CD8-positive, alpha-beta memory T cell (primary cell): ENCODE measurements at regions of chr11 and their contacts with region 1.

Region 1: DNA sequence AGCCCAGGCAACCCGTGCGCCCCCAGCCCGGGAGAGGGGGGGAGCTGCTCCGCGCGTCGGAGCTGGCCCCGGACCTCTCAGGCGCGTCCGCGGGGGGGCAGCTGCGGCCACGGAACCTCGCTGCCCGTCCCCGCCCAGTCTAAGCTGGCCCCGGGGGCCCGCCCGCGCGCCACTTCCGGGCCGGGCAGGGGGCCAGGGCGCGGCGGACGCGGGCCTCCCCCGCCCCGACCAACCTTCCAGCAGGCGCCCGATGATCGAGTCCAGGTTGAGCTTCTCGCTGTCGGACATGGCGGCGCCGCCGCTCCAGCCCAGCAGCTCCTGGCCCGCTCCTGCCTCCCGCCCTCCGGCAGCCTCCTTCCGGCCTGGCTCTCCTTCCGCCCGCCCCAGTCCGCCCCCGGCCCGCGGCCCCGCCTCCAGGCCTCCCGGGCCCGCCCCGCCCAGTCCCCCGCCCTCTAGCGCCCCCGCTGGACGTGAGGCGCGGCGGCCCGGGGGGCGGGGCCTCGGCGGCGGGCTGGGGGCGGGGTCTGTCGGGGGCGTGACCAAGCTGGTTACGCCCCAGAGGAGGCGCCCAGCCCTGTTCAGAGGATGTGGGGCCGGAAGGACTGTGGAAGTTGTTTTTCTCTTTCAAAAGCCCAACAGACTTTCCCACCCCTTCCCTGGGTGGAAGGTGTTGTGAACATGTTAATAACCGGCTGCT is at the start of gene PPP1CA:
- DNase-seq: peak; percentile 87 to 93 (median 92)
- H3K4me3 ChIP-seq: peak within 1 kb of the TSS; percentile 88
- H3K4me3 Mint-ChIP-seq: peak within 1 kb of the TSS; percentile 89 to 99 (median 95)
- H3K27ac ChIP-seq: peak within 1 kb of the TSS; percentile 87
- H3K27ac Mint-ChIP-seq: peak within 1 kb of the TSS; percentile 78 to 98 (median 93)
- H3K4me1 ChIP-seq: peaks cover 74% of the 10 kb centered on the region
- H3K4me1 Mint-ChIP-seq: peaks cover 40 to 82% (median 53%) of the 10 kb centered on the region in 3 donors
- H3K27me3 ChIP-seq: no peaks in the 10 kb centered on the region
- H3K27me3 Mint-ChIP-seq: no peaks in the 10 kb centered on the region
- total RNA-seq, gene PPP1CA: 338 to 357 TPM

Region 2: DNA sequence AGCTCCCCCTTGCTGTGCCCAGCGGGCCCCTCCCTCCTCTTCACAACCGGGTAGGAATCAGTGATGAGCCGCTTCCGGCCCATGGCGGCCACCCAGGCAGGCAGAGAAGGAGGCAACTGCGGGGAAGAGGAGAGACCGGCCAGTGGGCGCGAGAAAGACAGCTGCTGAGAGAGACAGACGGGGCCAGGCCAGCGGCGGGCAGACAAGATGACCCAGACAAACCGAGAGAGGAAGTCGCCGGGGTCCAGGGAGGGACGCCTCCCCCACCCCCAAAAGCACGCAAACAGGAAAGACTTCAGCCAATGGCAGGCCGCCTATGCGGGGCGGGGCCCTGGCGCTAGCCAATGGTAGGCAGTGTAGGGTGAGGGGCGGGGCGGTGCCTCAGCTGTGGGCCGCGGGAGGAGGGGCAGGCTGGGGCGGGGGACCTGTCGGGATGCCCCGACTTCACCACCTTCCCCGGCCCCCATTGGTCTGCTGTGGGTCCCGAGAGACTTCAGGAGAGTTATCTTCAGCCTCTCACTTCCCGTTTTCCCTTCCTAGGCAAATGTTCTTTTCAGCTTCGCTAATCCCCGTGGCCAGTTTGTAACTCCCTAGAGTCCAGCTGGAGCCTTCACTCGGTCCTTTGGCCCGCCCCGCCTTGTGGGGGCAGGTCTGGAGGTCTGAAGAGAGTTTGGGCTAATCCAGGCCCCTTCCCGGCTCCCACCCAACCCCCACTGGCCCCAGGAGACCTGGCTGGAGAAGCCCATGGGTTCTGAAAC is 48.1 kb before region 1 on chr11 and contains the start of gene POLD4:
- CTCF ChIA-PET with region 1: interaction called, 23 read pairs
- POLR2A ChIA-PET with region 1: interaction called, 18 read pairs
- DNase-seq: peak; percentile 92 to 97 (median 96)
- H3K4me3 ChIP-seq: peak within 1 kb of the TSS; percentile 96
- H3K4me3 Mint-ChIP-seq: peak within 1 kb of the TSS; percentile 92 to 98 (median 95)
- H3K27ac ChIP-seq: peak within 1 kb of the TSS; percentile 96
- H3K27ac Mint-ChIP-seq: peak within 1 kb of the TSS; percentile 97 to 99 (median 98)
- H3K4me1 ChIP-seq: peaks cover 50% of the 10 kb centered on the region
- H3K4me1 Mint-ChIP-seq: peaks cover 35 to 69% (median 55%) of the 10 kb centered on the region in 3 donors
- H3K27me3 ChIP-seq: no peaks in the 10 kb centered on the region
- H3K27me3 Mint-ChIP-seq: no peaks in the 10 kb centered on the region
- total RNA-seq, gene POLD4: 32.3 to 37.8 TPM

Region 3: GRCh38 chr11:67391304-67392132 is 10.1 kb before region 1 on chr11 and contains the start of gene RAD9A:
- CTCF ChIA-PET with region 1: interaction called, 53 read pairs
- POLR2A ChIA-PET with region 1: interaction called, 38 read pairs
- DNase-seq: peak; percentile 88 to 96 (median 94)
- H3K4me3 ChIP-seq: peak within 1 kb of the TSS; percentile 96
- H3K4me3 Mint-ChIP-seq: peak within 1 kb of the TSS; percentile 86 to 94 (median 87)
- H3K27ac ChIP-seq: peak within 1 kb of the TSS; percentile 83
- H3K27ac Mint-ChIP-seq: peak within 1 kb of the TSS; percentile 80 to 96 (median 88)
- H3K4me1 ChIP-seq: peaks cover 25% of the 10 kb centered on the region
- H3K4me1 Mint-ChIP-seq: peaks cover 30 to 48% (median 36%) of the 10 kb centered on the region in 3 donors
- H3K27me3 ChIP-seq: no peaks in the 10 kb centered on the region
- H3K27me3 Mint-ChIP-seq: no peaks in the 10 kb centered on the region
- total RNA-seq, gene RAD9A: 36.8 to 38.8 TPM

Region 4: DNA sequence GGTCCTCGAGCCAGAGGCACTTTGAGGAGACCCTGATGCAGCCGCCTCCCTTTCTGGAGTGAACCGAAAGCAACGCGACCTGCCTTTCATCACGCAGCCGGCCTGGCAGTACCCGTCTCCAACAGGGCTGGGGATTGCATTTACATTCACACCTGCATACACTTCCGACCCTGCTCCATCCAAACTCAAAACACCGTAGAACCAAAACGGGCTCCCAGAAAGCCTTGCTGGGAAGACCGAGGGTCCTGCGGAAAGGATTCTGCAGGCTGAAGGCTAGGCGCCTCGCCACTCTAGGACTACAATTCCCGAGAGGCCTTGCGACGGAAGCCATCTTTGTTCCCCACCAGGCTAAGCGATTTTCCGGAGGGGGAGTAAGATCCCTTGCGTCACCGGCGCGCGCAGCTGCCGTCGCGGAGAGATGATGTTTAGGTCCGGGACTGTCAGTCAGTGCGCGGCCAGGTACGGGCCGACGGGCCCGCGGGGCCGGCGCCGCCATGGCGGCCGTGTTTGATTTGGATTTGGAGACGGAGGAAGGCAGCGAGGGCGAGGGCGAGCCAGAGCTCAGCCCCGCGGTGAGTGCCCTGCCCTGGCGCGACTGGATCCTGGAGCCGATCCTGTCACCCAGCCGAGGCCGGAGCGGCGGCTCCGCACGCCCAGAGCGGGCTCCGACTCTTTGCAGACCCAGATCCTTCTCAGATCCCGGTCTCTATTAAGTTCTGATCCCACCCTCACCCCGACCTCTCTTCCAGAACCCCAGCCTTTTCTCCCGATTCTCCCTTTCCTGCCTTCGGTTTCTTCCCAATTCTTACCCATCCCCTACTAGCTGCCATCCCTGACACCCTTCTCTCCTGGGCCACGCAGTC is 26.6 kb after region 1 on chr11 and contains the start of gene RPS6KB2:
- CTCF ChIA-PET with region 1: interaction called, 23 read pairs
- POLR2A ChIA-PET with region 1: interaction called, 203 read pairs
- DNase-seq: peak; percentile 96 to 99 (median 99)
- H3K4me3 ChIP-seq: peak within 1 kb of the TSS; percentile 76
- H3K4me3 Mint-ChIP-seq: peak within 1 kb of the TSS; percentile 94 to 100 (median 99)
- H3K27ac ChIP-seq: peak within 1 kb of the TSS; percentile 91
- H3K27ac Mint-ChIP-seq: peak within 1 kb of the TSS; percentile 93 to 99 (median 98)
- H3K4me1 ChIP-seq: peaks cover 39% of the 10 kb centered on the region
- H3K4me1 Mint-ChIP-seq: peaks cover 24 to 60% (median 31%) of the 10 kb centered on the region in 3 donors
- H3K27me3 ChIP-seq: no peaks in the 10 kb centered on the region
- H3K27me3 Mint-ChIP-seq: peaks cover 0 to 6% of the 10 kb centered on the region in 2 donors
- total RNA-seq, gene RPS6KB2: 86.0 to 88.4 TPM

Region 5: GRCh38 chr11:67482825-67483798 is 81.5 kb after region 1 on chr11 and contains the start of gene AIP:
- CTCF ChIA-PET with region 1: interaction called, 13 read pairs
- POLR2A ChIA-PET with region 1: interaction called, 18 read pairs
- DNase-seq: peak; percentile 96 to 98 (median 96)
- H3K4me3 ChIP-seq: peak within 1 kb of the TSS; percentile 96
- H3K4me3 Mint-ChIP-seq: peak within 1 kb of the TSS; percentile 87 to 99 (median 95)
- H3K27ac ChIP-seq: peak within 1 kb of the TSS; percentile 80
- H3K27ac Mint-ChIP-seq: peak within 1 kb of the TSS; percentile 90 to 100 (median 98)
- H3K4me1 ChIP-seq: peaks cover 51% of the 10 kb centered on the region
- H3K4me1 Mint-ChIP-seq: peaks cover 49 to 58% (median 57%) of the 10 kb centered on the region in 3 donors
- H3K27me3 ChIP-seq: no peaks in the 10 kb centered on the region
- H3K27me3 Mint-ChIP-seq: no peaks in the 10 kb centered on the region
- total RNA-seq, gene AIP: 160 to 171 TPM

Region 6: GRCh38 chr11:67505605-67506396 is 104.2 kb after region 1 on chr11:
- CTCF ChIA-PET with region 1: interaction called, 14 read pairs
- POLR2A ChIA-PET with region 1: interaction called, 9 read pairs
- DNase-seq: peak; percentile 88 to 93 (median 90)
- H3K4me3 ChIP-seq: peak overlapping the region; percentile 66
- H3K4me3 Mint-ChIP-seq: peak overlapping the region; percentile 83 to 93 (median 91)
- H3K27ac ChIP-seq: peak overlapping the region; percentile 91
- H3K27ac Mint-ChIP-seq: peak overlapping the region; percentile 94 to 99 (median 98)
- H3K4me1 ChIP-seq: peaks cover 42% of the 10 kb centered on the region
- H3K4me1 Mint-ChIP-seq: peaks cover 43 to 65% (median 45%) of the 10 kb centered on the region in 3 donors
- H3K27me3 ChIP-seq: no peaks in the 10 kb centered on the region
- H3K27me3 Mint-ChIP-seq: peaks cover 0 to 6% of the 10 kb centered on the region in 2 donors